Mammary epithelial cell (primary cell): ENCODE measurements at regions of chr12 and their contacts with region 1.

Region 1: DNA sequence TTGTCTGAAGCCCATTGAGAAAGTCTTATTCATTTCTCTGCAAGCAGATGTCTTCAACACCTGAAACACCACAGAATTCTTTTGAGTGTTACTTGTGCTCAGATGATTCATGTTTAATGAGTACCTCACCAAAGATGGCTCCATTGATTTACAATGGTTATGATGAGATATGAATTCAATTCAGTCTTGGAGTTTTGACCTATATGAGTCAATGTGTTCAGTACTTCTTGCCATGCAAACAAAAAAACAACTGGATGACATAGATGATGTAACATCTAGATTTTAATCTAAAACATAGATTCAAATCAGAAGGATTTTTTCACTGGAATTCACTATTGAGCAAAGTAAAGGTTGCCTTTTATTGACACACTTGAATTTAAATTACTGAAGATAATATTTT is 15.5 kb upstream of the PAWR start:
- DNase-seq: peak; percentile 92
- H3K4me3 ChIP-seq: no peak overlapping the region
- H3K27ac ChIP-seq: peak overlapping the region; percentile 41
- H3K4me1 ChIP-seq: peaks cover 13% of the 10 kb centered on the region
- H3K27me3 ChIP-seq: no peaks in the 10 kb centered on the region
- CTCF ChIP-seq: no peak

Region 2: DNA sequence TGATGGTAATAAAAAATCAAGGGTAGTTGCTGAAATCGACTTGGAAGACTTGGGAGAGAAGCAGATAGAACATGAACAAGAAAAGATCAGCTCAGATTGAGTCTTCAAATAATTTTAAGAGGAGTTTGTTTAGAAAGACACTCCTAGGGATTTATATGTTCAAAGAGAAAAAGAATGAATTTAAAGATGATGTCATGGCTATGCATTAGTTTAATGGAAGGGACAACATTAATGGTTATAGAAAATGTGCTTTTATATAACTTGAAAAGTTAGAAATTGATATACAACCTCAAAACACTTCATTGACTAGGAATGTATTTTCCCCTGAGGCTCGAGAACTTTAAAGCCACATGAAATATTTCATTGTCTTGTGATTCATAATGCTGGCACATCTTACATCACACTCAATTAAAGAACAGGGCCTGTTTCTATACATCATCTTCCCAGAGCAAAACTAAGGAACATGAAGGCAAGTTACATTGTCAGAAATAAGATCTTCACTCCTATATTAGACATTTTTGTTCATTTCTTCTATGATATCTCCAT is 19.7 kb after region 1 on chr12:
- CTCF ChIA-PET with region 1: no interaction called
- dilution Hi-C with region 1: no loop called
- in situ Hi-C with region 1: no loop called
- intact Hi-C with region 1: loop called (anchors 1 kb)
- DNase-seq: peak; percentile 86
- H3K4me3 ChIP-seq: no peak overlapping the region
- H3K27ac ChIP-seq: peak overlapping the region; percentile 67
- H3K4me1 ChIP-seq: peaks cover 15% of the 10 kb centered on the region
- H3K27me3 ChIP-seq: no peaks in the 10 kb centered on the region
- CTCF ChIP-seq: no peak